Spleen (tissue), 13 donors: ENCODE measurements at regions of chr22 and their contacts with region 1.

Region 1: GRCh38 chr22:17501679-17502285 is 61.5 kb upstream of the SLC25A18 start:
- DNase-seq: no peak
- H3K4me3 ChIP-seq: no peak overlapping the region
- H3K27ac ChIP-seq: no peak overlapping the region
- H3K4me1 ChIP-seq: peaks cover 0 to 13% (median 2%) of the 10 kb centered on the region in 6 donors
- H3K27me3 ChIP-seq: peaks cover 0 to 7% (median 0%) of the 10 kb centered on the region in 7 donors
- CTCF ChIP-seq: peak; percentile 26 to 74 (median 67)
- POLR2A ChIP-seq: no peak

Region 2: GRCh38 chr22:17171313-17172171 is 330.2 kb before region 1 on chr22:
- intact Hi-C with region 1: loop called (anchors 2 kb)
- DNase-seq: peak; percentile 97
- H3K4me3 ChIP-seq: peak overlapping the region; percentile 45 to 87 (median 72)
- H3K27ac ChIP-seq: peak overlapping the region; percentile 88 to 96 (median 94)
- H3K4me1 ChIP-seq: peaks cover 0 to 29% (median 15%) of the 10 kb centered on the region in 6 donors
- H3K27me3 ChIP-seq: no peaks in the 10 kb centered on the region
- CTCF ChIP-seq: peak; percentile 73 to 97 (median 91)
- POLR2A ChIP-seq: no peak